Activated CD8-positive, alpha-beta T cell treated with anti-CD3 and anti-CD28 coated beads, Interleukin-2, amount 10 ng/mL, durations not matched to agents 7 days and 5 days (primary cell): ENCODE measurements at regions of chr17 and their contacts with region 1.

Region 1: GRCh38 chr17:4966844-4967538 is 626 bp downstream of the SPAG7 start:
- DNase-seq: peak; percentile 98
- ATAC-seq: peak; percentile 93
- H3K4me3 Mint-ChIP-seq: no peak overlapping the region
- H3K27ac Mint-ChIP-seq: no peak overlapping the region
- H3K4me1 Mint-ChIP-seq: peaks cover 22% of the 10 kb centered on the region
- H3K27me3 Mint-ChIP-seq: no peaks in the 10 kb centered on the region

Region 2: DNA sequence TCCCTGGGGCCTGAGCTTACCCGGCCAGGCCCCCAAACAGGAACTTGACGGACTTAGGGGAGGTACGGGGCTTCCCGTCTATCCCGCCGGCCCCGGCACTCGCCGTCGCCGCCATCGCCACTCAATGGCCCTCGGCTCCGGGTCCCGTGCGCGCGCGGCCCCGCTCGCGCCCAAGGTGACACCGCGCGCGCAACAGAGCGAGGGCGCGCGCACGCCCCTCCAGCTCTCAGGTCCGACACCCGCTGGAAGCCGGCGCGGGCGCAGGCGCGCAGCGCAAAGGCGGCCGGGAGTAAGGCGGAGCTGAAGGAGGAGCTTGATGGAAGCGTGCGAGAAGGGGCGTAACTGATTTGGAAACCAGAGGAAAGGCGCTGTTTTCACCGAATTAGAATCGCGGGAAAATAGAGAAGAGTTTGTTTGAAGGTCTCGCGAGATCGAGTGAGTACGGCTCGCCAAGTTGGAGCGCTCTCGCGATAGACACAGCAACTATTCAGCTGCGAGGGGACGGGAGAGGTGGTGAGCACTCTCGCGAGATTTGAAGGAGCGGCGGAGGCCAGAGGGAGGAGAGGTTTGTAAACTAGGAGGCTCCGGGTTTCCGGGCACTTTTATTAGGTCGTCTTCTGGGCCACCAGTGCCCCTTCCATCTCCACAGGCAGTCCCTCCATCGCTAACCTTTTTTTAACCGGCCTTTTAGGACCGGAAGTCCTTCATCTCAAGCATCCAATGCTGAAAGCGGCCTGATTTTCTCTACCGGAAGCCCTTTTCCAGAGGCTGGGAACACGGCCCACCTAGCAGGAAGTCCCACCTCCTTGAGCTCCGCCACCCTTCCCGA is 27.0 kb before region 1 on chr17 and contains the starts of genes RNF167 and SLC25A11:
- CTCF ChIA-PET with region 1: interaction called, 26 read pairs
- POLR2A ChIA-PET with region 1: interaction called, 239 read pairs
- DNase-seq: peak; percentile 99
- ATAC-seq: peak; percentile 83
- H3K4me3 Mint-ChIP-seq: peak within 1 kb of the TSS; percentile 97
- H3K27ac Mint-ChIP-seq: peak within 1 kb of the TSS; percentile 88
- H3K4me1 Mint-ChIP-seq: peaks cover 67% of the 10 kb centered on the region
- H3K27me3 Mint-ChIP-seq: no peaks in the 10 kb centered on the region
- total RNA-seq, gene RNF167: 239 to 245 TPM
- total RNA-seq, gene SLC25A11: 78.5 to 86.4 TPM

Region 3: GRCh38 chr17:4956493-4957061 is 10.4 kb before region 1 on chr17:
- CTCF ChIA-PET with region 1: interaction called, 30 read pairs
- POLR2A ChIA-PET with region 1: interaction called, 239 read pairs
- DNase-seq: peak; percentile 56
- ATAC-seq: no peak
- H3K4me3 Mint-ChIP-seq: no peak overlapping the region
- H3K27ac Mint-ChIP-seq: no peak overlapping the region
- H3K4me1 Mint-ChIP-seq: peaks cover 17% of the 10 kb centered on the region
- H3K27me3 Mint-ChIP-seq: no peaks in the 10 kb centered on the region

Region 4: DNA sequence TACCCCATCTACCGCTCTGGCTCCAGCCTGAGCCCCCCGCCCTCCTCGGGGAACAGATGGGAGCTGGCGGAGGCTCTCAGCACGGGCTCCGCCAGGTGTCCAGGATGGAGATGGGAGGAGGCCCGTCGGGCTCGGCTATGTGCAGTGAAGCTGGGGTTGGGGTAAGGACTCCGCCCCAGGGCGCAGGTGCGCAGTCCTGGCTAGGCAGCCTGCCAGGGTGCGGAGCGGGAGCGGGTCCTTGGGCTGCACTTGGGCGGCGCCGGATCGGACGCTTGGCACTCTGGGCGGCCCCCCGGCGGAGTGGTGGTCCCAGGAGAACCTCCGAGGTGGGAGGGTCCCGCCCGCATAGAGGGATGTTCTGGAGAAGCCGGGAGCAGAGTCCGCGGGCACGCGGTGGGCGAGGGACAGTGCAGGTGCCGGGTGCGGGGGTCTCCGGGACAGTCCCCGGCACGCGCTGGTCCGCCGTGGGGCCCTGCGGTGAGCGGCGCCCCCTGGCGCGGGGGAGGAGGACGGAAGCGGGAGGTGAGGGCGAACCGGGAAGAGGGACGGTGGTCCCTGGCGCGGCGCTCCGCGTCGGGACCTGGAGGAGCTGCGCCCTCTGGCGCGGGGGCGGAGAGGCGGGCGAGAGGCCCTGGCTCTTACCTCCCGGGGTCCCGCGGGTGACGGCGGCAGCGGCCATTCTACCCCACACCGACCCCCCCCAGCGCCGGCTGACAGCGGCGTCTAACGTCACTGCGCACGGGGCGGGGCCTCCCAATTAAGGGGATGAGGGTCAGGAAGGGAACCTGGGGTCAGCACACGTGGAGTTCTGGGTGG is 20.2 kb after region 1 on chr17 and contains the start of gene CAMTA2:
- CTCF ChIA-PET with region 1: interaction called, 18 read pairs
- POLR2A ChIA-PET with region 1: interaction called, 4 read pairs
- DNase-seq: peak; percentile 91
- ATAC-seq: peak; percentile 89
- H3K4me3 Mint-ChIP-seq: peak within 1 kb of the TSS; percentile 88
- H3K27ac Mint-ChIP-seq: peak within 1 kb of the TSS; percentile 92
- H3K4me1 Mint-ChIP-seq: peaks cover 41% of the 10 kb centered on the region
- H3K27me3 Mint-ChIP-seq: no peaks in the 10 kb centered on the region
- total RNA-seq, gene CAMTA2: 51.3 to 55.5 TPM

Region 5: GRCh38 chr17:5065227-5065744 is 98.3 kb after region 1 on chr17:
- CTCF ChIA-PET with region 1: interaction called, 13 read pairs
- POLR2A ChIA-PET with region 1: no interaction called
- DNase-seq: no peak
- ATAC-seq: no peak
- H3K4me3 Mint-ChIP-seq: no peak overlapping the region
- H3K27ac Mint-ChIP-seq: no peak overlapping the region
- H3K4me1 Mint-ChIP-seq: peaks cover 3% of the 10 kb centered on the region
- H3K27me3 Mint-ChIP-seq: peaks cover 4% of the 10 kb centered on the region